GM18951 (cell line): ENCODE measurements at regions of chrX and their contacts with region 1.

Region 1: DNA sequence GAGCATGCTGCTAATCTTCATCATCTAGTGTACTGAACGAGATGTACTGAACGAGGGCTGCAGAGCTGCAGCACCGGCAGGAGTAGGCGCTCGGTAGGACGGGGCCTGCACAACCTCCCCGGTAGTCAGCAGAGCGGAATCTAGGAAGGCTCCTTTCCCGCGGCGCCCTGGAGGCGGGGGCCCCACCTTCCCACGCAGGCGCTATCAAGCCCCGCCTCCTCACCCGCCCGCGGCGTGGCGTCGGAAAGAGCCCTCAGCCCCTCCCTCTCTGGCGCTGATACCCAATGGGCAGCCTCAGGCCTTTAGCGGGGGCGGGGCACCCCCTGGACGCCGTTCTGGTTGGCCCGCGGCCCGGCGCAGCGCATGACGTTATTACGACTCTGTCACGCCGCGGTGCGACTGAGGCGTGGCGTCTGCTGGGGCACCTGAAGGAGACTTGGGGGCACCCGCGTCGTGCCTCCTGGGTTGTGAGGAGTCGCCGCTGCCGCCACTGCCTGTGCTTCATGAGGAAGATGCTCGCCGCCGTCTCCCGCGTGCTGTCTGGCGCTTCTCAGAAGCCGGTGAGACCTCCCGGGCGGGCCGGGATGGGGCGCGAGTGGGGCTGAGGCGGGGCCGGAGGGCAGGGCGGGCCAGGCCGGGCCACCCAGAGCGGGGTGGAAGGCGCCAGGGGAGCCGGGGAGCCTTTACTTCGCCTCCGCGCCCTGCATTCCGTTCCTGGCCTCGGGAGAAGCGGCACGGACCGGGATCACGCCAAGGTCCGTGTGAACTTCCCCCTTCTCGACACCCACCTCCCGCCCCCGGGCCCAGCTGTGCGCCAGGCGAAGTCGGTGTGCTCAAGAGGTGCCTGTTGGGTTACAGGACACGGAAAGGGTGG is at the start of gene PDHA1:
- POLR2A ChIP-seq: peak; percentile 72

Region 2: GRCh38 chrX:18899796-18900447 is 443.9 kb before region 1 on chrX:
- in situ Hi-C with region 1: loop called (anchors 25 kb)
- POLR2A ChIP-seq: no peak

Region 3: GRCh38 chrX:19040373-19040772 is 303.4 kb before region 1 on chrX:
- in situ Hi-C with region 1: loop called (anchors 25 kb)
- POLR2A ChIP-seq: no peak

Region 4: GRCh38 chrX:19245711-19246269 is 98.0 kb before region 1 on chrX:
- in situ Hi-C with region 1: no loop called
- POLR2A ChIP-seq: no peak

Region 5: DNA sequence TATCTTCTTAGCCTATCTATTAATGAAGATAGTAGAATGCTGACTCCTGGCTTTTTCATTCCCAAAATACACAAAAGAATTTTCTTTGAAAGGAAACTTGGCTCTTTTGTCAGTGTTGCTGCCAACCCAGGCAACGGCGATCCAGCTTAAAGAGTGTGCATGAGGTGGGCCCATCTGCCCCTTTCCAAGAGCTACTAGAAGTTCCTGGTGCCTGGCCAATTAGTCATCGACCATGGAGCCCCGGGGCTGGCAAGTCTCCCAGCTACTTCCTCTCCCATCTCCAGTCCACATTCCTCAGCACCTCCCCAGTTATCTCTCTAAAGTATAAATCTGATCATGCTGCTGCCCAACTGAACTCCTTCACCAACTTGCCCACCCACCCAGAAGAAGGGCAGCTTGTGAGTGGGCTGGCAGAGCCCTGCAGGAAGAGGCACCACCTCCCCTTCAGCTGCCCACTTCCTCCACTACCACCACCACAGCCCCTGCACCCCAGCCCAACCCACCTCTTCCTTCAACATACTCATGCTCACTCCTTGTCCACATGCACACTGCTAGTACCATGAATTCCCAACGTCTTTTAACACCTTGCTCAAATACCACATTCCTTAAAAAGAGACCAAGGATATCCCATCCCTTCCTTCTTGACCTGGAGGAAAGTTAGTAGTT is 329.7 kb after region 1 on chrX:
- in situ Hi-C with region 1: no loop called
- POLR2A ChIP-seq: no peak